Mammary epithelial cell (primary cell): ENCODE measurements at regions of chr6 and their contacts with region 1.

Region 1: GRCh38 chr6:46637145-46637544 is 15.5 kb downstream of the CYP39A1 start:
- DNase-seq: peak; percentile 92
- H3K4me3 ChIP-seq: no peak overlapping the region
- H3K27ac ChIP-seq: peak overlapping the region; percentile 57
- H3K4me1 ChIP-seq: peaks cover 24% of the 10 kb centered on the region
- H3K27me3 ChIP-seq: no peaks in the 10 kb centered on the region
- CTCF ChIP-seq: no peak

Region 2: GRCh38 chr6:46652603-46653438 is 15.7 kb after region 1 on chr6 and contains the starts of genes CYP39A1 and SLC25A27:
- CTCF ChIA-PET with region 1: no interaction called
- dilution Hi-C with region 1: no loop called
- in situ Hi-C with region 1: no loop called
- intact Hi-C with region 1: loop called (anchors 1 kb)
- DNase-seq: peak; percentile 93
- H3K4me3 ChIP-seq: peak within 1 kb of the TSS; percentile 63 to 87 (median 85)
- H3K27ac ChIP-seq: peak within 1 kb of the TSS; percentile 82
- H3K4me1 ChIP-seq: peaks cover 16% of the 10 kb centered on the region
- H3K27me3 ChIP-seq: no peaks in the 10 kb centered on the region
- CTCF ChIP-seq: no peak
- total RNA-seq, gene CYP39A1: 2.4 to 5.2 TPM
- total RNA-seq, gene SLC25A27: 11.8 to 18.1 TPM